AG04449 (cell line): ENCODE measurements at regions of chr9 and their contacts with region 1.

Region 1: DNA sequence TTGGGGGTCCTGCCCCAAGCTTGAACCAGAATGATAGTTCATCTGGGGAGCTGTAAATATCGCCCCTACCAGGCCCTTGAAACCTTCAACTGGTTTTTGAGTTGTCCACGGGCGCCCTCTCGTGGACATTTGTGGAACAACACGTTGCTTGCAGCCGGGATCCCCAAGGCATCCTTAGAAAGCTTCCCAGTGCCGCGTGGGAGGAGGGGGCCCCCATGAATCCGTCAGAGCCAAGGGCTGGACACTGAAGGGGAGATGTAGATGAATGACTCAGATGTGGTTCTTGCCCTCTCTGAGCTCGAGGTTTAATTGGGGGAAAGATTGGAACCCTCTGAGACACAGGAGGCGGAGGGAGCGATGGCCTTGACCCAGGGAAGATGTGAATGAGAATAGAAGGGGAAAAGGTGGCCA is 31.8 kb upstream of the ORM1 start:
- DNase-seq: no peak
- H3K4me3 ChIP-seq: no peak overlapping the region
- CTCF ChIP-seq: peak; percentile 74

Region 2: DNA sequence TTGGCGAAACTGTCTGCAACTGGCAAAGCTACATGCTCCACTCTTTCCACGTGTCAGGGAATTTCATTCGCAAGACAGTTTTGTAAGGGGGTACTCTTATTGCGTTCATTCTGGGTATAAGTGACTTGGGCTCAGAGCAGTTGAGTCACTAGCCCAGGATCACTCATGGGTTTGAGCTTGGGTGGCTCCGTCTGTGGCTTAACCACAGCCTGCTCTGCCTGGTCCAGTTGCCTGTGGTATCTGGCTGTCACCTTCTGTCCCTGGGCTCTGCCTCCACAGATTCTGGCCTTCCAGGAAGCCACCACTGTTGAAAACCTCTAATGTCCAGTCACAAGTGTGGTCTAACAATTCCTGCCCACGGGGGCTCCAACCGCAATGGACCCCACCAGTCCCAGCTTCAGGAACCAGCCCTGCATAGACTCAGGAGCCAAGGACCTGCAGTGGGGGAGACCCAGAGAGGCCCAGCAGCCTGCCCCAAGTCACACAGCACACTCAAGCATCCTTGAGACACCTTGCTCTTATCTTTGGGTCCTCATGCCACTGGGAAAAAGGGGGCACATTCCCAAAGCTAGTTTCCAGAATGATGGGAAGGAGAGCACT is 202.4 kb before region 1 on chr9:
- CTCF ChIA-PET with region 1: interaction called, 176 read pairs
- POLR2A ChIA-PET with region 1: no interaction called
- DNase-seq: no peak
- H3K4me3 ChIP-seq: no peak overlapping the region
- CTCF ChIP-seq: no peak

Region 3: DNA sequence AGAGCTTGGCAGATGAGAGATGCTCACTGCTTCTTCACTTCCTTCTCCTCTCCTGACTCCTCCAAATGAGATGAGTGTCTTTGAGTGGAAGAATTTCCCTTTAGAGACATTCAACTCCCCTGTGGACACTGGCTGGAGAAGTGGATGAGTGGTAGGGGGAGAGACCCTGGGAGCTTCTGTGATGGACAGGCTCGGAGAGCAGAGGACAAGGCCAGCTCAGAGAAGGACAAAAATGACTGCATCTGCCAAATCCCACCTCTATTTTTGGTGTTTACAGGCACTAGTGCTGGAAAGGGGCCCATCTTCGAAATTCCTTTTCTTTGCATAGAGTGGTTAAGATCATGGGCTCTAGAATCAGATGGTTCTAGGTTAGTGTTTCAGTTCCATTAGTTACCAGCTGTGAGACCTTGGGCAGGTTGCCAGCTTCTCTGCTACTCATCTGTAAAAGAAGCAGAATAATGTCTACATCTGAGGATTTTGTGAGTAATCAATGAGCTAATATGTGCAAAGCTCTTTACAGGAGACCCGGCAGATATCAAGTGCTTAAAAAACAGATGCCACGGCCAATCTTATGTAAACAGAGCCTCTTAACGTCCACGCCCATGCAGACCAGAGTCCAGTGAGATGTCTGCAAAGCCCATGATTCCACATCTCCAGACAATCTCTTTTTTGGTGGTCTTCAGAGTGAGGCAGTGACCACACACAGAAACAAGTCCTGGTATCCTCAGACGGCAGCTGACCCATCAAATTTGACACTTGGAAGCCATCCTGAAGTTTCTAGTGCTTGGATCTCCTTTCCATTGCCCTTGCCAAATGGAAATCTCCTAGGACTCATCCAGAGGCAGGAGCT is 149.3 kb before region 1 on chr9:
- CTCF ChIA-PET with region 1: interaction called, 28 read pairs
- POLR2A ChIA-PET with region 1: no interaction called
- DNase-seq: no peak
- H3K4me3 ChIP-seq: no peak overlapping the region
- CTCF ChIP-seq: no peak

Region 4: DNA sequence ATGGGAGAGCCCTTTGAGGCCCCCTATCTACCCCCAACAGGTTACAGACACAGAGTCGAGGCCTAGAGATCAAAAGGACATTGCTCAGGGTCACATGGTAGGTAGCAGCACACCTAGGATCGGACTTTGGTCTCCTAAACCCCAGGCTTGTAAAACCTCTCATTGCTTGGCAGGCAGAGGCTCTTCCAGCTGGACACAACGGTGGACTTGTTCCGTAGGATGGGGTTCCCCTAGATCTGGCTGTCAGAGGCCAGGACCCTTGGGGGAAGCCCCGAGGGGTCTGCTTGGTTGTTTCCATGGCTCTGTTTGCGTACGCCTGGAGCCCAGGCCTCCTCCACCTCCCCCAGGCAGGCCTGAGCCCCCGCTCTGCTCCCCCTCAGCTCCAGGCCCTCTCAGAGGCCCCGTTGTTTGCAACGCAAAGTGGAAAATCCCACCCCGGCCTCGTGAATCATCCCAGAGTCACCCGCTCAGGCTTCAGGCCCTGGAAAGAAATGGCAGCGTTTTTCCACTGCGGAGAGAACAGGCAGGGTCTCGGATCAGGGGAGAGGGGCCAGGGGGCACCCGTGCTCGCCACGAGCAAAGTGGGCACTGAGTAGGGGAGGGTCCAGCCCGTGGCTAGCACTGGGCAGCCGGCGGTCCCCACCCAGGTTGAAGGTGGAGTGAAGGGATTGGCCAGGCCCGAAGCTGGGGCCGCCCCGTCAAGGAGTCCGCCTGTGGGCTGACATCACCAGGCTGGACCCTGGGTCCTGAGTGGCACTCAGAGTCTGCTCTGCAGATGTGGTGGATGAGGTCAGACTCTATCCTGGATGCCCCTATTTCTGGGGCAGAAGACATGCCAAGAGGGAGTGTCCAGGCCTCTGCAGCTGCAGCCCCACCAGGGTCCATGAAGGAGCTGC is 115.9 kb before region 1 on chr9:
- CTCF ChIA-PET with region 1: interaction called, 35 read pairs
- POLR2A ChIA-PET with region 1: interaction called, 3 read pairs
- DNase-seq: no peak
- H3K4me3 ChIP-seq: no peak overlapping the region
- CTCF ChIP-seq: no peak

Region 5: DNA sequence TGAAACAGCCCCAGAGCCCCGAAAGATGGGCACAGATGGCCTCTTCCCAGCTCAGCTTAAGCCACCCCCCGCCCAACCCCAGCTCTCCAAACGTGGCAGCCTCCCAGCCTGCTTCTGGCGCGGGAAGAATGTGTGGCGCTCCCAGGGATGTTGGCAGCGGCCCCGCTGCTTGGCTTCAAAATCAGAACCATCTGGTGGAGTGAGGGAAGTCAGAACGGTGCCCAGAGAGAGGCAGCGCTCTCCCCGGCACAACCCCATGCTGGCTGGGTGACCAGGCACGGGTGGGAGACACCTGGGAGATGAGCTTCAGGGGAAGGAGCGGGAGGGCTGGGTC is 40.9 kb before region 1 on chr9:
- CTCF ChIA-PET with region 1: interaction called, 22 read pairs
- POLR2A ChIA-PET with region 1: interaction called, 3 read pairs
- DNase-seq: peak; percentile 73
- H3K4me3 ChIP-seq: no peak overlapping the region
- CTCF ChIP-seq: no peak

Region 6: DNA sequence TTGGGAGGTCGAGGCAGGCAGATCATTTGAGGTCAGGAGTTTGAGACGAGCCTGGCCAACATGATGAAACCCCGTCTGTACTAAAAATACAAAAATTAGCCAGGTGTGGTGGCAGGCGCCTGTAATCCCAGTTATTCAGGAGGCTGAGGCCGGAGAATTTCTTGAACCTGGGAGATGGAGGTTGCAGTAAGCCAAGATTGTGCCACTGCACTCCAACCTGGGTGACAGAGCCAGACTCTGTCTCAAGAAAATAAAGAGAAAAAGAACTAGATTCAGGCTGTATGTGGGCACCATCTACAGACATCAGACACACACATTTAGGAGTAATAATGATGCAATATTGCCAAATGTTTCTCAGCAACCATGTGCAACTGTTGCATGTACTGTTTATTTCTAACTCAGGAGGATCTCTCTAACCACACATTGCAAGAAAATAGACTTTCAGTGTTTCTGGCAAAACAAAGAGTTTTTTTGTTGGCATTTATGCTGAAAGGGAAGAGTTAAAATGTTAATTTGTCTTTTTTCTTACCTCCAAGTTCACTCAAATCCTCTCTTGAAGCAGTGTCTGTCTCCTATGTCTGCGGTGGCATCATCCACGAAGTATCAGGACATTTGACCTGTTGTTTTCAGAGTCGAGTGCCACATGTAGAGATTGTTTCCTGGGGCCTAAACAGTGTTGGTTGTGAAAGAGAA is 26.7 kb after region 1 on chr9:
- CTCF ChIA-PET with region 1: interaction called, 11 read pairs
- POLR2A ChIA-PET with region 1: no interaction called
- DNase-seq: peak; percentile 47
- H3K4me3 ChIP-seq: no peak overlapping the region
- CTCF ChIP-seq: no peak